Gastrocnemius medialis (tissue), 4 donors: ENCODE measurements at regions of chr6 and their contacts with region 1.

Region 1: DNA sequence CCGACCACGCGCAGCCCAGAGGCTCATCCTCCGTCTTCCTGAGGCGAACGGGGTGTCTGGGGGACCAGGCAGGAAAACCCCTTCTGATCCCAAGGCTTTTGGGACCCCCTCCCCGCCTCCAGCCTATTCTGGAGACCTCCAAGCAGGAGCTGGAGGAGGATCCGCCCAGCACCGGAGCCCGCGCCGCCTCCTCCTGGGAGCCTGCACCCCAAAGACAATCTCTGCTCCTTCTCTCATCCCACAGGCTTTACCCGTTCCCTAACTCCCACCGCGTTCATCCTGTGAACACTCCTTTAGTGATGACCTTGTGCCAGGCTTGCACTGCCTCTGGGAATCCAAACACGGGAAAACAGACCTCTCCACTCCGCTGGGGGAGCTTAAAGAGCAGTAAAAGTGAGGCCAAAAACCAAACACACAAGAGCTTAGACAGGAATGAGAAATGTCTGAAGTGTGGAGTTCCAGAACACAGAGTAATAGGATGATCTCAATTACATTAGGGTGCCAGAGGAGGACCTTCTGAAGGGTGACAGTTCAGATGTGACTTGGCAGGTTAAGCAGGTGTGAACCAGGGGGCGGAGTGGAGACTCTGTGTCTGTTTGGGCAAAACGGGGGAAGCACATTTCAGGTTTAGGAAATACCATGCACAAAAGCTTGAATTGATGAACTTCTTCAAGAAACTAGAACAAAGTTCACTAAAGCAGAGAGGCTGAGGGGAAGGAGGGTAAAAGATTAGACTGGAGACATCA is 7.6 kb downstream of the HLA-DRB5 start:
- DNase-seq: no peak
- ATAC-seq: no peak
- H3K4me3 ChIP-seq: peak overlapping the region in 1 of 4 donors; percentile 26
- H3K27ac ChIP-seq: peak overlapping the region in 1 of 4 donors; percentile 18
- H3K4me1 ChIP-seq: no peaks in the 10 kb centered on the region
- H3K27me3 ChIP-seq: no peaks in the 10 kb centered on the region
- CTCF ChIP-seq: no peak
- POLR2A ChIP-seq: no peak

Region 2: DNA sequence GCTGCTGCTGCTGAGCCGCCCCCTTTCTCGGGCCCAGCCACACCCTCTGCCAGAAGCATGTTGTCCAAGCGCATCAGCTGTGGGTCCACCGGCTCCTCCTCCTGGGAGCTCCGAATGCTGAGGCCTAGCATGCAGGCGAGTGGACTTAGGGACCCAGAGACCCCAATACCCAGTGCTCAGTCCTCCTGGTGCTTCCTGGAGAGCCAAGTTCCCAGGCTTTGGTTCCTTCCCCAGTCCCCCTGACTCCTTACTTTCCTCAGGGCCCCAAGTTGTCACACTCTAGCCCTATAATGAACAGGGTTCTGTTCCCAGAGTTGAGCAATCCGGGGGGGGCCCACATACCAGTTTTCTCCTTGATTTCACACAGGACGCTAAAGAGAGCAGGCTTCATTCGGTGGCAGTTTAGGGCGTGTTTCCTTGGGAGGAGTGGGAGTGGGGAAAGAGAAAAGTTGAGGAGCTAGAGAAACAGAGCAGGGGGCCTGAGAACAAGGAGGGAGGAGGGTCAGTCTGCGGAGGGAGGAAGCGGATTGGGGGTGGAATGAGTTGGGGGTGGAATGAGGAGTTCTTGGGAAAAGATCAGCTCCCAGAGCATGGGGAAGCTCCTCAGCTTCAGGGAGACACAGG is 334.0 kb before region 1 on chr6:
- in situ Hi-C with region 1: no loop called
- intact Hi-C with region 1: no loop called
- DNase-seq: no peak
- ATAC-seq: no peak
- H3K4me3 ChIP-seq: peak overlapping the region; percentile 71 to 87 (median 78)
- H3K27ac ChIP-seq: peak overlapping the region; percentile 96 to 99 (median 98)
- H3K4me1 ChIP-seq: peaks cover 33 to 50% of the 10 kb centered on the region in 2 donors
- H3K27me3 ChIP-seq: no peaks in the 10 kb centered on the region
- CTCF ChIP-seq: no peak
- POLR2A ChIP-seq: no peak

Region 3: DNA sequence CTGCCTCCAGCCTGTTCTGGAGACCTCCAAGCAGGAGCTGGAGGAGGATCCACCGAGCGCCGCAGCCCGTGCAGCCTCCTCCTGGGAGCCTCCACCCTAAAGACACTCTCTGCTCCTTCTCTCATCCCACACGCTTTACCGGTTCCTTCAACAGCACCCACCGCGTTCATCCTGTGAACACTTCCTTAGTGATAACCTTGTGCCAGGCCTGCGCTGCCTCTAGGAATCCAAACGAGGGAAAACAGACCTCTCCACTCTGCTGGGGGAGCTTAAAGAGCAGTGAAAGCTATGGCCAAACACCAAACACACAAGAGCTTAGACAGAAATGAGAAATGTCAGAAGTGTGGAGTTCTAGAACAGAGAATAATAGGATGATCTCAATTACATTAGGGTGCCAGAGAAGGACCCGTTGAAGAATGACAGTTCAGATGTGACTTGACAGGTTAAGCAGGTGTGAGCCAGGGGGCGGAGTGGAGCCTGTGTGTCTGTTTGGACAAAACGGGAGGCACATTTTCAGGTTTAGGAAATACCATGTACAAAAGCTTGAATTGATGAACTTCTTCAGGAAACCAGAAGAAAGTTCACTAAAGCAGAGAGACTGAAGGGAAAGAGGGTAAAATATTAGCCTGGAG is 36.1 kb after region 1 on chr6:
- in situ Hi-C with region 1: no loop called
- intact Hi-C with region 1: loop called (anchors 5 kb)
- DNase-seq: no peak
- ATAC-seq: peak in 1 of 2 donors; percentile 23
- H3K4me3 ChIP-seq: no peak overlapping the region
- H3K27ac ChIP-seq: no peak overlapping the region
- H3K4me1 ChIP-seq: no peaks in the 10 kb centered on the region
- H3K27me3 ChIP-seq: no peaks in the 10 kb centered on the region
- CTCF ChIP-seq: no peak
- POLR2A ChIP-seq: no peak